ENCODE measurements at regions of chr4 and their contacts with region 1.

Region 1: GRCh38 chr4:20773144-20773997 is 73.1 kb downstream of the PACRGL start:
- DNase-seq: peak; percentile 32
- ATAC-seq: peak; percentile 88
- H3K4me3 ChIP-seq: no peak overlapping the region
- H3K27ac ChIP-seq: no peak overlapping the region
- H3K4me1 ChIP-seq: no peaks in the 10 kb centered on the region
- H3K27me3 ChIP-seq: no peaks in the 10 kb centered on the region
- CTCF ChIP-seq: peak; percentile 23 to 67 (median 67); a peak in 4 of 6 replicates
- POLR2A ChIP-seq: no peak
- RAD21 ChIP-seq: peak; percentile 62

Region 2: DNA sequence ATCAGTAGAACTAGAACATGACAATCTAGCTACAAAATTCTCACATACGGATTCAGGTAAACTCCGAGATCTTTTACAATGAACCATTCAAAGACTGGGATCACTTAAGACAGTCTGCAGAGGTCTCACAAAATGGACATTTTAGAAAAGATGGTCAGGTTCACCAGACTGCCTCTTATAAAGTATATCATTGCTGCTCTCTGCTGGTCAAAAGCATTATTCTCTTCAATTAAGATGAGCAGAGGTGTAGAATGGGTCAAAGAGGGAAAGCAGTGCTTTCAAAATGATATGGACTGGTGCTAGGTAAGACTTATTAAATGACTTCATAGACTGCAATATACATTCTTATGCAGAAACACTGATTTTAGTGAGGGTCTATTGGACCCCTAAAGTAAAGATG is 361.6 kb after region 1 on chr4:
- CTCF ChIA-PET with region 1: no interaction called
- POLR2A ChIA-PET with region 1: no interaction called
- RAD21 ChIA-PET with region 1: no interaction called
- intact Hi-C with region 1: loop called (anchors 10 kb)
- DNase-seq: no peak
- ATAC-seq: no peak
- H3K4me3 ChIP-seq: no peak overlapping the region
- H3K27ac ChIP-seq: no peak overlapping the region
- H3K4me1 ChIP-seq: no peaks in the 10 kb centered on the region
- H3K27me3 ChIP-seq: no peaks in the 10 kb centered on the region
- CTCF ChIP-seq: no peak
- POLR2A ChIP-seq: no peak
- RAD21 ChIP-seq: no peak

Region 3: GRCh38 chr4:21469438-21470300 is 696.3 kb after region 1 on chr4:
- CTCF ChIA-PET with region 1: interaction called, 10 read pairs
- POLR2A ChIA-PET with region 1: no interaction called
- RAD21 ChIA-PET with region 1: interaction called in 1 of 2 experiments, 4 read pairs
- intact Hi-C with region 1: loop called (anchors 1 kb)
- DNase-seq: no peak
- ATAC-seq: no peak
- H3K4me3 ChIP-seq: no peak overlapping the region
- H3K27ac ChIP-seq: no peak overlapping the region
- H3K4me1 ChIP-seq: no peaks in the 10 kb centered on the region
- H3K27me3 ChIP-seq: no peaks in the 10 kb centered on the region
- CTCF ChIP-seq: peak; percentile 18 to 50 (median 36); a peak in 4 of 6 replicates
- POLR2A ChIP-seq: no peak
- RAD21 ChIP-seq: peak; percentile 37

Region 4: GRCh38 chr4:21765810-21766407 is 992.5 kb after region 1 on chr4:
- CTCF ChIA-PET with region 1: interaction called, 7 read pairs
- POLR2A ChIA-PET with region 1: interaction called, 3 read pairs
- RAD21 ChIA-PET with region 1: interaction called in 1 of 2 experiments, 3 read pairs
- intact Hi-C with region 1: loop called (anchors 1 kb)
- DNase-seq: peak; percentile 18
- ATAC-seq: peak; percentile 74
- H3K4me3 ChIP-seq: no peak overlapping the region
- H3K27ac ChIP-seq: no peak overlapping the region
- H3K4me1 ChIP-seq: no peaks in the 10 kb centered on the region
- H3K27me3 ChIP-seq: no peaks in the 10 kb centered on the region
- CTCF ChIP-seq: peak; percentile 41 to 91 (median 80); a peak in 5 of 6 replicates
- POLR2A ChIP-seq: no peak
- RAD21 ChIP-seq: peak; percentile 54